WTC11 (cell line): ENCODE measurements at regions of chr14 and their contacts with region 1.

Region 1: DNA sequence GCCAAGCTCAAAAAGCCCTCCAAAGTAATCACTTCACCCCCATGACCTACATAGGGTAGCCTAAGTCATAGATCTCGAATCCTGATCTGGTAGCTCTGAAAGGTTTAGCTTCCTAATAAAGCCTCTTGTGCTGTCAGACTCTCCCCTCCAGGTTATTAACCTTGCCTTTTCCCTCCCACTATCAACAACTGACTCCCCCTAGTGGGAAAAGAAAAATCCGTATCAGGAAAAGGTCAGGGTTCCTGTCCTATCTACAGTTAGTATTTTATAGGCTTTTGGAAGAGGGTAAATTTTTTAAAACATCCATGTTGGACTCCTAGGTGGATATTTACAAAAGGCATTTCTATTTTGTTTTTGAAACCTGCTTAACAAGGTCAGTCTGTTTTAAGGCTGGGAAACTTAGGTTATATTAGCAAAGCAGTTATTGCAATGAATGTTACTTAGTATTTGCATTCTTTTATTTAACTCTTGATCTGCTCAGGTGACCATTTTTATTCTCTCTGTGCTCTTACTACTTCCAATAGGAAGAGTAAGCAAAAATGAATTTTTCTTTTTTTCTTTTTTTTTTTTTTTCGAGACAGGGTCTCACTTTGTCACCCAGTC is 8.0 kb downstream of the YY1 start:
- DNase-seq: no peak
- ATAC-seq: peak; percentile 80
- H3K4me3 Mint-ChIP-seq: 0 out of 2 replicates have a peak overlapping the region, but pooled peaks have one; percentile 11
- H3K27ac Mint-ChIP-seq: peak overlapping the region; percentile 77
- H3K4me1 Mint-ChIP-seq: peaks cover 61% of the 10 kb centered on the region
- H3K27me3 Mint-ChIP-seq: no peaks in the 10 kb centered on the region
- CTCF ChIP-seq: peak; percentile 27

Region 2: GRCh38 chr14:100221533-100222223 is 25.2 kb before region 1 on chr14:
- CTCF ChIA-PET with region 1: interaction called, 28 read pairs
- POLR2A ChIA-PET with region 1: no interaction called
- DNase-seq: peak; percentile 57
- ATAC-seq: peak; percentile 83
- H3K4me3 Mint-ChIP-seq: no peak overlapping the region
- H3K27ac Mint-ChIP-seq: no peak overlapping the region
- H3K4me1 Mint-ChIP-seq: peaks cover 2% of the 10 kb centered on the region; the same call in 1 of the 2 replicates
- H3K27me3 Mint-ChIP-seq: no peaks in the 10 kb centered on the region
- CTCF ChIP-seq: no peak

Region 3: DNA sequence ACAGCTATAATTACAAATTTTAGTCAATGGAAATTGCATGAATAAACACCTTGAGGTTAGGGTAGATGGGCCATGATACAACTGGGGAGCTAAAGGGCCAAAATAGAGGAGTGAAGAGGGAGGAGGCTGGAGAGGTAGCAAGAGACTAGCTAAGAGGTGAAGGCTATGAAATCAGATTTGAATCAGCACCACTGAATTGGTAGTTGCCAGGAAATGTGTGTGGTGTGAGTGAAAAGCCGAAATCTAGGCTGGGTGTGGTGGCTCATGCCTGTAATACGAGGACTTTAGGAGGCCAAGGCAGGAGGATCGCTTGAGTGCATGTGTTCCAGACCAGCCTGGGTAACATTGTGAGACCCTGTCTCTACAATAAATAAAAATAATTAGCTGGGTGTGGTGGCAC is 14.7 kb after region 1 on chr14:
- CTCF ChIA-PET with region 1: interaction called, 16 read pairs
- POLR2A ChIA-PET with region 1: interaction called, 3 read pairs
- DNase-seq: no peak
- ATAC-seq: no peak
- H3K4me3 Mint-ChIP-seq: no peak overlapping the region
- H3K27ac Mint-ChIP-seq: peak overlapping the region; percentile 54; the same call in 1 of the 2 replicates
- H3K4me1 Mint-ChIP-seq: peaks cover 22% of the 10 kb centered on the region
- H3K27me3 Mint-ChIP-seq: no peaks in the 10 kb centered on the region
- CTCF ChIP-seq: no peak

Region 4: DNA sequence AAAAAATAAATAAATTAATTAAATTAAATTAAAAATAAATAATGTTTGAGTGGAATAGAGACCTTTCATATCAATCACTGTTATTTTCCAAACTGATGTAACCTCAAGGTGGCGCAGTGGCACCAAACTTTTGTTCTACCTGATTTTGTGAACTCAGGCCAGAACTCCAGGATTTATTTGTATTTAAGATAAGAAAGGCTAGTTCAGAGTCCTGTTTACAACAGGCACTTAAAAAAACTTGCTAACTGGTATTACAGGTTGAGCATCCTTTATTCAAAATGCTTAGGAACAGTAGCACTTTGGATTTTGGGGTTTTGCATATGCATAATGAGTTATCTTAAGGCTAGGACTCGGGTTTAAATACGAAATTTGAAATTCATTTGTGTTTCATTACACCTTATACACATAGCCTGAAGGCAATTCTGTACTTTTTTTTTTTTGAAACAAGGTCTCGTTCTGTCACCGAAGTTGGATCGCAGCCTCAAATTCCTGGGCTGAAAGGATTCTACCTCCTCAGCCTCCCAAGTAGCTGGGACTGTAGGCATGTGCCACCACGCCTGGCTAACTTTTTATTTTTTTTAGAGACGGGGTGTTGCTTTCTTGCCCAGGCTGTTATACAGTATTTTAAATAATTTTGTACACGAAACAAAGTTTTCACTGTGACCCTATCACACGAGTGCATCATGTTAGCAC is 24.5 kb after region 1 on chr14:
- CTCF ChIA-PET with region 1: interaction called, 11 read pairs
- POLR2A ChIA-PET with region 1: no interaction called
- DNase-seq: no peak
- ATAC-seq: no peak
- H3K4me3 Mint-ChIP-seq: no peak overlapping the region
- H3K27ac Mint-ChIP-seq: no peak overlapping the region; the same call in 1 of the 2 replicates
- H3K4me1 Mint-ChIP-seq: peaks cover 54% of the 10 kb centered on the region
- H3K27me3 Mint-ChIP-seq: no peaks in the 10 kb centered on the region
- CTCF ChIP-seq: no peak

Region 5: DNA sequence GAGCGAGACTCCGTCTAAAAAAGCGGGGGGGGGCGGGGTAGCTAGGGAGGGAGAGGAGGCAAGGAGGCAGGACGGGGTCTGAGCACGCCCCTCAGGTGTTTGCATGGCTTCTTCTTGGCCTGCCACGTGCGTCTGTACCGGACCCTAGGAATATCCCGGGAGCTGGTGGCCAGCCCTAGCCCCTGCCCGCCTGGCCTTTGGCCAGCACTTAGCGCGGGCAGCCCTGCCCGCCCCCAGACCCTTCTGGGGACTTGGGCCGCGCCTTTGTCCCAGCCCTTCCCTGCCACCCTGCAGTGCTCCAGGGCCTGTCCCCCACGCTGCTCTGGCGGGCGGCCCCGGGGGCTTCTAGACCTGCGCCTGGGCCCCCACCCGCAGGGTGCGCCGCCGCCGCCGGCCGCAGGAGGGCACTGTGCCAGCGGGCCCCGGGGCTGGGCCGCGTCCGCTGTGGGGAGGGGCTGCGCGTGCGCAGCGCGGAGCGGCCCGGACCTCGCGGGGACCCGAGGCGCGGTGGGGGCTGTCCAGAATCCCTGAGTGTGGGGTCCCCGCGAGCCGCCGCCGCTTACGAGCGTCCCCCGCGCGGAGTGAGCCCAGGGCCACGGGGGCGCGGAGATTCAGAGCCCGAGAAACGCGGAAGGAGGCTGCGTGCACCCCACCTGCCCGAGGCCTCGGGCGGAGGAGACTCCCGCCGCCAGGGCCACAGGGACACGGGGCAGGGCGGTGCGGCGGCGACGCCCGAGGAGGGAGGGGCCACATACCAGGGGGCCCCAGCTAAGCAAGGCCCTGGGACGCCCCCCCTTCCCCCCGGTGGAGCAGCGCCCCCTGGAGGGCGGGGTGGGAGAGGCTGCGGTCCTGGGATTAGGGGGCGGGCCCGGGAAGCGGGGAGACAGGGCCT is 38.3 kb after region 1 on chr14:
- CTCF ChIA-PET with region 1: interaction called, 28 read pairs
- POLR2A ChIA-PET with region 1: no interaction called
- DNase-seq: peak; percentile 80
- ATAC-seq: peak; percentile 69
- H3K4me3 Mint-ChIP-seq: peak overlapping the region; percentile 64
- H3K27ac Mint-ChIP-seq: no peak overlapping the region; the same call in 1 of the 2 replicates
- H3K4me1 Mint-ChIP-seq: peaks cover 47% of the 10 kb centered on the region
- H3K27me3 Mint-ChIP-seq: no peaks in the 10 kb centered on the region
- CTCF ChIP-seq: peak; percentile 82